ENCODE measurements at regions of chr1 and their contacts with region 1.

Region 1: DNA sequence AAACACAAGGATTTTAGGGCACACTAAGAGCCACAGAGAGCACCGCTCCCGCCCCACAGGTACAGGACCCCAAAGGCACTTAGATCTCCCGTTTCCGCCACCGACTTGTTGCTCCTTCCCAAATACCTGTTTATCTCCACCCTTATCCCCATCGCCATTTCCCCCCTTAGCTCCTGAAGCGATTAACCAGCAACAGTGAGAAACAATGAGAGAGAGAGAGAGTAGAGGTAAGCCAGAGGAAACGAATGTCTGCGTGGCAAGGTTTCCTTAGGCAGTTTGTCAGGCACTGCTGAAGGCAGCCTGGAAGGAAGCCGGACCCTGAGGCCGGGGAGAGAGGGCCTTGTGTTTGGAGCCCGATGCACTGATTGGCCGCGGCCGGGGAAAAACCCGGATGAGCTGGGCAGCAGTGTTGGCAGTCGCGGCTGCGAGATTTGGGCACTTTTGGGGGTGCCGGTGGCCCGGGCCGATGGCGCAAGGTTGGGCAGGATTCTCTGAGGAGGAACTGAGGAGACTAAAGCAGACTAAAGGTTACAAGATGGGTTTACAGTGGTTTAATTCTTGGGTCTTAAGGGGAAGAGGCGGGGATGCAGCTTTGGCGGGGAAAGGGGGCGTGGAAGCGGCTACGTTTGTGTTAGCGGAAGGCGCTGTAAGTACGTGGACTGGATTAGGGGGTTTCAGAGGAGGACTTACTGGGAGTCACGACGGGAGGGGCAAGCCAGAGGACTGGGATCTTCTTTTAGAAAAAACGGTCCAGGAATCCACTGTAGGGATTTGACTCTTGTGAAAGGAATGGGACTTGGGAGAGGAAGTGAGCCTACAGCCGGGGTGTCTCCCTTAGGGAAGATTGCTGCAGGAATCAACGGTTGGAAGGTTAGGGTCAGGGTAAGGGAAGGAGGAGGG is at the start of gene GORAB:
- DNase-seq: peak; percentile 72 to 93 (median 85)
- ATAC-seq: peak; percentile 90
- H3K4me3 ChIP-seq: peak within 1 kb of the TSS; percentile 73 to 86
- H3K4me3 Mint-ChIP-seq: no peak within 1 kb of the TSS
- H3K27ac ChIP-seq: peak within 1 kb of the TSS; percentile 80 to 91
- H3K27ac Mint-ChIP-seq: no peak within 1 kb of the TSS
- H3K4me1 ChIP-seq: peaks cover 14% of the 10 kb centered on the region
- H3K4me1 Mint-ChIP-seq: peaks cover 22% of the 10 kb centered on the region
- H3K27me3 ChIP-seq: no peaks in the 10 kb centered on the region
- H3K27me3 Mint-ChIP-seq: no peaks in the 10 kb centered on the region
- CTCF ChIP-seq: no peak
- total RNA-seq, gene GORAB: 24.8 to 26.1 TPM

Region 2: GRCh38 chr1:170074250-170075157 is 457.5 kb before region 1 on chr1 and contains the start of gene KIFAP3:
- CTCF ChIA-PET with region 1: no interaction called
- POLR2A ChIA-PET with region 1: no interaction called
- intact Hi-C with region 1: loop called (anchors 2 kb)
- DNase-seq: peak; percentile 89 to 99 (median 95)
- ATAC-seq: peak; percentile 96
- H3K4me3 ChIP-seq: peak within 1 kb of the TSS; percentile 74 to 92
- H3K4me3 Mint-ChIP-seq: peak within 1 kb of the TSS; percentile 89
- H3K27ac ChIP-seq: peak within 1 kb of the TSS; percentile 80 to 88
- H3K27ac Mint-ChIP-seq: peak within 1 kb of the TSS; percentile 94
- H3K4me1 ChIP-seq: peaks cover 28% of the 10 kb centered on the region
- H3K4me1 Mint-ChIP-seq: peaks cover 53% of the 10 kb centered on the region
- H3K27me3 ChIP-seq: no peaks in the 10 kb centered on the region
- H3K27me3 Mint-ChIP-seq: no peaks in the 10 kb centered on the region
- CTCF ChIP-seq: peak; percentile 46
- total RNA-seq, gene KIFAP3: 15.3 to 16.5 TPM

Region 3: GRCh38 chr1:170495006-170495405 is 37.0 kb before region 1 on chr1:
- CTCF ChIA-PET with region 1: no interaction called
- POLR2A ChIA-PET with region 1: no interaction called
- intact Hi-C with region 1: no loop called
- DNase-seq: no peak
- ATAC-seq: no peak
- H3K4me3 ChIP-seq: no peak overlapping the region
- H3K4me3 Mint-ChIP-seq: no peak overlapping the region
- H3K27ac ChIP-seq: no peak overlapping the region
- H3K27ac Mint-ChIP-seq: no peak overlapping the region
- H3K4me1 ChIP-seq: no peaks in the 10 kb centered on the region
- H3K4me1 Mint-ChIP-seq: peaks cover 7% of the 10 kb centered on the region
- H3K27me3 ChIP-seq: no peaks in the 10 kb centered on the region
- H3K27me3 Mint-ChIP-seq: peaks cover 16% of the 10 kb centered on the region
- CTCF ChIP-seq: no peak

Region 4: GRCh38 chr1:170562646-170563338 is 30.8 kb after region 1 on chr1:
- CTCF ChIA-PET with region 1: no interaction called
- POLR2A ChIA-PET with region 1: no interaction called
- intact Hi-C with region 1: no loop called
- DNase-seq: peak in 4 of 9 experiments; percentile 2 to 38 (median 12)
- ATAC-seq: peak; percentile 23
- H3K4me3 ChIP-seq: no peak overlapping the region
- H3K4me3 Mint-ChIP-seq: no peak overlapping the region
- H3K27ac ChIP-seq: no peak overlapping the region
- H3K27ac Mint-ChIP-seq: no peak overlapping the region
- H3K4me1 ChIP-seq: no peaks in the 10 kb centered on the region
- H3K4me1 Mint-ChIP-seq: peaks cover 4% of the 10 kb centered on the region
- H3K27me3 ChIP-seq: no peaks in the 10 kb centered on the region
- H3K27me3 Mint-ChIP-seq: peaks cover 8% of the 10 kb centered on the region
- CTCF ChIP-seq: no peak

Measured in CD8-positive, alpha-beta T cell (primary cell).